Activated CD4-positive, alpha-beta memory T cell treated with anti-CD3 and anti-CD28 coated beads, Interleukin-2, amount 10 ng/mL, durations not matched to agents 7 days and 5 days (primary cell): ENCODE measurements at regions of chr12 and their contacts with region 1.

Region 1: GRCh38 chr12:51025836-51026638 is at the start of gene SLC11A2:
- DNase-seq: peak; percentile 93
- H3K4me3 Mint-ChIP-seq: peak within 1 kb of the TSS; percentile 100
- H3K27ac Mint-ChIP-seq: peak within 1 kb of the TSS; percentile 98
- H3K4me1 Mint-ChIP-seq: peaks cover 53% of the 10 kb centered on the region
- H3K27me3 Mint-ChIP-seq: peaks cover 8% of the 10 kb centered on the region
- total RNA-seq, gene SLC11A2: 35.0 to 36.4 TPM

Region 2: GRCh38 chr12:50763639-50764285 is 262.3 kb before region 1 on chr12 and contains the start of gene ATF1:
- CTCF ChIA-PET with region 1: interaction called, 20 read pairs
- POLR2A ChIA-PET with region 1: interaction called, 40 read pairs
- DNase-seq: peak; percentile 93
- H3K4me3 Mint-ChIP-seq: peak within 1 kb of the TSS; percentile 79
- H3K27ac Mint-ChIP-seq: peak within 1 kb of the TSS; percentile 91
- H3K4me1 Mint-ChIP-seq: peaks cover 32% of the 10 kb centered on the region
- H3K27me3 Mint-ChIP-seq: no peaks in the 10 kb centered on the region
- total RNA-seq, gene ATF1: 44.0 to 48.3 TPM

Region 3: GRCh38 chr12:50953045-50953444 is 73.0 kb before region 1 on chr12:
- CTCF ChIA-PET with region 1: no interaction called
- POLR2A ChIA-PET with region 1: no interaction called
- DNase-seq: no peak
- H3K4me3 Mint-ChIP-seq: no peak overlapping the region
- H3K27ac Mint-ChIP-seq: no peak overlapping the region
- H3K4me1 Mint-ChIP-seq: no peaks in the 10 kb centered on the region
- H3K27me3 Mint-ChIP-seq: no peaks in the 10 kb centered on the region

Region 4: DNA sequence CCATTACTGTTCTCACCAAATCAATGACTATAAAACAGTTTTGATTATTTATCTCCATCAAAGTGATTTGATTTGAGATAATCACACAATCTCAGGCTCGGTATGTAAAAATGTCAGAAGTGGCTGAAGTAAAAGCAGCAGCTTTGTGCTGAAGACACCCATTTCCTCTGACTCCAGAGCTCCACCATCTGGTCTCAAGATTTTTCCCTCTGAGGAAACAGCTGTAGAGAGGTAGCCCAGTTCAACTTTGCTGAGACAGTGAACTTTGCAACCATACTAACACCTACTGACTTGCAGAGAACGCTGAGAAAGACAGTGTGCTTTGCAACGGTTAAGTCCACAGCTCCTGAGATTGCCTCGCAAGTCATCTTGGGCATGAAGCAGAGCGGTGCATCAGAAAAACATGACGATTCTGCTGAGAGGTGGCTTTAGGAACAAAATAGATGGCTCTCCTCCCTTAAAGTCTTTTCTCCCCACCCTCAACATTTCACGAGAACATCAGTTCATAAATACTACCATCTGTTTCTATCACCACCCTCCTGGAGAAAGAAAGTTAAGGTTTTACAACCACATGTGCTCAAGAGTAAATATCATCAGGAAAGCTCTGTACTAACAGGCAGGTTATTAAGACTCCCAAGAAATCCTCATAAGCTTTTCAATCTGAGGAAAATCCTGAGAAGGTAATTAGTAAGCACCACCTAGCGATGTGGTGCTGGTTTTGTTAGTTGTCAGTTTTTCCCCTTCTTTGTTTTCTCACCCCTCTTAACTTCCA is 38.9 kb before region 1 on chr12:
- CTCF ChIA-PET with region 1: interaction called, 11 read pairs
- POLR2A ChIA-PET with region 1: interaction called, 3 read pairs
- DNase-seq: peak; percentile 20
- H3K4me3 Mint-ChIP-seq: no peak overlapping the region
- H3K27ac Mint-ChIP-seq: no peak overlapping the region
- H3K4me1 Mint-ChIP-seq: peaks cover 21% of the 10 kb centered on the region
- H3K27me3 Mint-ChIP-seq: no peaks in the 10 kb centered on the region

Region 5: GRCh38 chr12:51047655-51048540 is 21.9 kb after region 1 on chr12 and contains the start of gene LETMD1:
- CTCF ChIA-PET with region 1: interaction called, 18 read pairs
- POLR2A ChIA-PET with region 1: interaction called, 38 read pairs
- DNase-seq: peak; percentile 93
- H3K4me3 Mint-ChIP-seq: peak within 1 kb of the TSS; percentile 94
- H3K27ac Mint-ChIP-seq: peak within 1 kb of the TSS; percentile 92
- H3K4me1 Mint-ChIP-seq: peaks cover 37% of the 10 kb centered on the region
- H3K27me3 Mint-ChIP-seq: no peaks in the 10 kb centered on the region
- total RNA-seq, gene LETMD1: 92.1 to 93.9 TPM

Region 6: DNA sequence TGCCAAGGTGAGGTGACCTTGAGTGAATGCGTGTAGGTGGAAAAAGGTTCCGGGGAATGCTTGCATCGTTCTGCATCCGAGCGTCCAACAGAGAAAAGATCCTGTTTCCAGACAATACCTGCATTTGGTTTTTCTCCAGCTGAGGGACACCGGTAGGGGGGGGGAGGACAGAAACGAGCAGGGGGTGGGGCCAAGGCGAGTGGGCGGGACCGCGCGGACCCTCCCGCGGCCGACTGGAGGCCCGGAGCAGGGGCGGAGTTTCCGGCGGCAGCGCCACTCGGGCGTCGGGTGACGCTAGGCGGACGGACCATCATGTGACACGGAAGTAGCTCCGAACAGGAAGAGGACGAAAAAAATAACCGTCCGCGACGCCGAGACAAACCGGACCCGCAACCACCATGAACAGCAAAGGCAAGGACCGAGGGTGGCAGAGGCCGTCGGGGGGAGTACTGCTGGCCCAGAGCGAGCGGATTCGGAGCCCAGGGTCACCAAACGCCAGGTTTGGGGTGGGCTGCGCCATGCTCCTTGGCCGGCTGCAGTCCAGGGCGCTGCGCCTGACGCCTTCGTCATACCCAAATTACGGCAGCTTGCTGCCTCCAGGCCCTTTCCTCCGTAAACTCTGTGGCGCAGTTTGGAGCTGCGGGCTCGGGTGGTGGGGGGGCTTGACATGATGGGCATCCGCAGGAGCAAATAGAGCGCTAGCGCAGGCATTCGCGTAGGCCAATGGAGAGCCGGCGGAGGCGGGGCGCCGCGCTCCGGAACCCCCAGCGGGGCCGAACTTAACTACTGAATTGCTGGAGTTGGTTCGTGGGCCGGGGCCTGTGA is 212.7 kb after region 1 on chr12 and contains the start of gene DAZAP2:
- CTCF ChIA-PET with region 1: no interaction called
- POLR2A ChIA-PET with region 1: interaction called, 20 read pairs
- DNase-seq: peak; percentile 97
- H3K4me3 Mint-ChIP-seq: peak within 1 kb of the TSS; percentile 93
- H3K27ac Mint-ChIP-seq: peak within 1 kb of the TSS; percentile 98
- H3K4me1 Mint-ChIP-seq: peaks cover 39% of the 10 kb centered on the region
- H3K27me3 Mint-ChIP-seq: peaks cover 4% of the 10 kb centered on the region
- total RNA-seq, gene DAZAP2: 247 TPM